ENCODE measurements at regions of chr11 and their contacts with region 1.

Region 1: GRCh38 chr11:1335811-1336761 is 26.7 kb upstream of the TOLLIP start:
- DNase-seq: peak; percentile 78
- ATAC-seq: peak; percentile 76
- H3K4me3 Mint-ChIP-seq: peak overlapping the region; percentile 71
- H3K27ac Mint-ChIP-seq: peak overlapping the region; percentile 66
- H3K4me1 Mint-ChIP-seq: peaks cover 15% of the 10 kb centered on the region
- H3K27me3 Mint-ChIP-seq: peaks cover 3% of the 10 kb centered on the region

Region 2: GRCh38 chr11:1371836-1372465 is 35.9 kb after region 1 on chr11:
- CTCF ChIA-PET with region 1: no interaction called
- POLR2A ChIA-PET with region 1: no interaction called
- intact Hi-C with region 1: no loop called
- DNase-seq: no peak
- ATAC-seq: no peak
- H3K4me3 Mint-ChIP-seq: no peak overlapping the region
- H3K27ac Mint-ChIP-seq: no peak overlapping the region
- H3K4me1 Mint-ChIP-seq: no peaks in the 10 kb centered on the region
- H3K27me3 Mint-ChIP-seq: peaks cover 2% of the 10 kb centered on the region

Region 3: DNA sequence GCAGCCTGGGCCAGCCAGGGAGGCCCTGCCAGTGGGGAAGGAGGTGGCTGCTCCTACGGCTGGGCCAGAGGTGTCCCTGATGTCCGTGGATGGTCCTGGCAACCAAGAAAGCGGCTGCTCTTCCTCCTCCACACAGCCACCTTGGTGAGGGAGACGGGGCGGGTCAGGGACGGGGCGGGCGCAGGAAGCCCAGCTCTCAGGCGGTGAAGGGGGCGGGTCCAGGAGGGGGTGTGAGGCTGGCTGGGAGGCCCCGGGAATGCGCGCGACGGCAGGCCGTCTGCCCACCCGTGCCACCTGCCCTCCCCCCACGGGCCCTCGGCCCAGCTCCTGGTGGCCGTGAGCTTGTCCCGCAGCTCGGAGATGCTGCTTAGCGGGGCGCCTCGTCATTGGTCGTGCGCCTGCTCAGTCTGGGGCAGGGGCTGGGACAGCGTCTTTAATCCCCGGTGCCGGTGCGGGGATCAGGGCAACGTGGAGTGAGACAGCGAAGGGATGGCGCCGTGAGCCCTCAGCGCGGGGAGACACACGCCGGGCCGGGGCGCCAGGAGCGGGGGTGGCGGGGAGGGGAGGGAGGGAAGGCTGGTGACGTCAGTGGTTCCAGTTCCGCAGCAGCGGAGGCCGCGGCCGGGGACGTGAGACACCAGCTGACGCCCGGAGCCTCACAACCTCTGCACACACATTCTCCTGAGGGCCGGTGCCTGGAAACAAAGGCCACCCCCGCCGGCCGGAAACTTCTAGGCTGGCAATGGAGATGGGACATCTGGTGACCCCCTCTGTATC is 46.9 kb after region 1 on chr11:
- CTCF ChIA-PET with region 1: no interaction called
- POLR2A ChIA-PET with region 1: no interaction called
- intact Hi-C with region 1: loop called in 1 of 2 experiments (anchors 1 kb)
- DNase-seq: peak; percentile 92
- ATAC-seq: peak; percentile 82
- H3K4me3 Mint-ChIP-seq: peak overlapping the region; percentile 66
- H3K27ac Mint-ChIP-seq: peak overlapping the region; percentile 83
- H3K4me1 Mint-ChIP-seq: peaks cover 16% of the 10 kb centered on the region
- H3K27me3 Mint-ChIP-seq: no peaks in the 10 kb centered on the region

Region 4: DNA sequence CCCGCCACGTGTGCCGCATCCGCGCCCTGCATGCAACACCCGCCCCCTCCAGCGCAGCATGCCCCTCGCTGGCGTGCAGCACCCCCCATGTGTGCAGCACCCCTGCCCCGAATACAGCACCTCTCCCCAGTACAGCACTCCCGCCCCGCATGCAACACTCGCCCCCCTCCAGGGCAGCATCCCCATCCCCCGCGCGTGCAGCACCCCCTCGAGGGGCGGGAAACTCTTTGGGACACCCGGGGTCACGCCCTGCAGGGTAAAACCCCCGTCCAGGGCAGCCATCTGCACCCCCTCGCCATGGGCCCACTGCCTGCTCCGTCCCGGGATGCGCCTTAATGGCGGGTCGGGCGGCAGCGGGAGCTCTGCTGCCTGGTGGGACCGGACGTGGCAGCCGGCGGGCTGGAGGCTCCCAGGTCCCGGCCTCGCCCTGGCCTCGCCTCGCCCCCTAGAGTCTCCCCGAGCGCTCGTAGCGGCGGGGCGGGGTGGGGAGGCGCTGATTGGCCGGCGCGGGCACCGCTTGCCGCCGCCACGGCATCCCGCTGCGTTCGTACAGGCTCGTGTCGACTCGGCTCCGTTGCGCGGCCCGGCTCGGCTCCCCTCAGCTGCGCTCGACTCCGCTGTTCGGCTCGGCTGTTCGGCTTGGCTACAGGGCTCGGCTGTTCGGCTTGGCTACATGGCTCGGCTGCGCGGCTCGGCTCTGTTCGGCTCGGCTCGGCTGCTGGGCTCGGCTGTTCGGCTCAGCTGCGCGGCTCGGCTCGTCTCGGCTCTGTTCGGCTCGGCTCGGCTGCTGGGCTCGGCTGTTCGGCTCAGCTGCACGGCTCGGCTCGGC is 53.2 kb after region 1 on chr11:
- CTCF ChIA-PET with region 1: interaction called, 3 read pairs
- POLR2A ChIA-PET with region 1: no interaction called
- intact Hi-C with region 1: loop called in 1 of 2 experiments (anchors 1 kb)
- DNase-seq: peak; percentile 99
- ATAC-seq: peak; percentile 99
- H3K4me3 Mint-ChIP-seq: peak overlapping the region; percentile 53
- H3K27ac Mint-ChIP-seq: no peak overlapping the region
- H3K4me1 Mint-ChIP-seq: peaks cover 9% of the 10 kb centered on the region
- H3K27me3 Mint-ChIP-seq: peaks cover 25% of the 10 kb centered on the region

Measured in activated CD4-positive, alpha-beta T cell treated with anti-CD3 and anti-CD28 coated beads for 36 hours (primary cell).